Ascending aorta (tissue), 2 donors: ENCODE measurements at regions of chr12 and their contacts with region 1.

Region 1: DNA sequence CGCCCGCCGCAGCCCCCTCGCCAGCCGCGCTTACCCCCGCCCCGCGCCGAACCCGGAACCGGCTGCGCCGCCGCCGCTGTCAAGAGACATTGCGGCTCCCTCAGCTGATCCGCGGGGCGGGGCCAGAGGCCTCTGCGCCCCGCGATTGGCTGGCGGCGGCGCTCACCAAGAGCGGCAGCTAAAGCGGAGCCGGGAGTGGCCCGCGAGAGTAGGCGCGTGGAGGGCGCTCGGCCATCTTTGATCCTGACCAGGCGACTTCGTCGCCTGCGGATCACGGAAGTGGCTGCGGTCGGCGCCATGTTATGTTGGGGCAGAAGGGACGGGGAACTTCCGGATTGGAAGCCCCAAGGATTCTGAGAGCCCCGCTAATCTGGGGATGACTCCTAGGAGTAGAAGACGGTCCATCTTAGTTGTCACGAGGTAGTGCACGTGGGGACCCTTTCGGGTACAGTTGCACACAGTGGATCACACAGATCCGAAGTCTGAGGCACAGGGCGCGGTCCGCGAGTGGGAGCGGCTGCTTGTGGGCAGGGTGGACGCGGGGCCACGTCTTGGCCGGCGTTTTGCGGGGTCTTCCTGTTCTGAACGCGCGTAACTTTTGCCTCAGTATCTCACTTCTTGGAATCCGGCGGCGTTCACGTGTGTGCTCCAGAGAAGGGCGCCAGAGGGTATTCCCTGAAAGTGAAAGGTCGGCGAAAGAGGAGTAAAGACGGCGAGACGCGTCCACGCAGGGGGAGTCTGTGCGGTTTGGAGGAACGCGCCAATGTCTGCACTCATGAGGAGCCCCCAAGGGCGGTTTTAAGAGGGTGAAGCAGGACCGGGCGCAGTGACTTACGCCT is at the start of gene CHFR:
- DNase-seq: peak; percentile 92 to 98
- H3K4me3 ChIP-seq: peak within 1 kb of the TSS; percentile 76 to 80
- H3K27ac ChIP-seq: peak within 1 kb of the TSS; percentile 93 to 96
- H3K4me1 ChIP-seq: peaks cover 0 to 6% of the 10 kb centered on the region in 2 donors
- H3K27me3 ChIP-seq: no peaks in the 10 kb centered on the region
- CTCF ChIP-seq: no peak
- total RNA-seq, gene CHFR: 7.9 TPM

Region 2: DNA sequence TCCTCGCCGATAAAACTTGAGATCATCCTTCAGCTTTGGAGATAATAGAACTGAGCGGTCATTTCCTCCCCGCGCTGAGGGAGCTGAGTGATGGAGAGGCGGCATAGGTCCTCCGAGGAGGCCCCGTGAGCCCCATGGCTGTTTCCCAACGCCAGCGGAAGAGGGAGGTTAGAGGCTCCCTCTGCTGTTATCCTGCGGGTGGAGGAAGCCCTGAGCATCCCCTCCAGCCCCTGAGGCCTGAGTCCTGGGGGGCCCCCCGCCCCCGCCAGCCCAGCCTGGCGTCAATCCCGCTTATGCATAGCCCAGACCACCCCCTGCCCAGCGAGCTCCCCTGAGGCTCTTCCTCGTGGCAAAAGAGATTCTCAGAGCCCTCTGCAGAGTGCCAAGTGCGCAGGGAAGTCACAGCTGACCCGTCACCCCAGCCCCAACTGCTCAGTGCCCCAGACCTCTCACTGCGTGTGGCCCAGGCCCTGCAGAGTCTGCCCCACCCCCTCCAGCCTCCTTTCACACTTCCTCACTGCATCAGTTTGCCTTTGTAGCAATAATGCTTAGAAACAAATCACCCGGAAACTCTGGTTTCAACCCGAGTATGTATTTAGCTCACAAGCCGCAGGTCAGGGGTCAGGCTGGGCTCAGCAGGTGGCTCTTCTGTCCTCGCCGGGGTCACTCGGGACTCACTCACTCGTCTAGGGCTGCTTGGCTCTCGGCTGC is 513.7 kb before region 1 on chr12:
- intact Hi-C with region 1: no loop called
- DNase-seq: no peak
- H3K4me3 ChIP-seq: no peak overlapping the region
- H3K27ac ChIP-seq: no peak overlapping the region
- H3K4me1 ChIP-seq: no peaks in the 10 kb centered on the region
- H3K27me3 ChIP-seq: no peaks in the 10 kb centered on the region
- CTCF ChIP-seq: no peak

Region 3: GRCh38 chr12:132710422-132711168 is 177.1 kb before region 1 on chr12 and contains the start of gene PGAM5:
- intact Hi-C with region 1: no loop called
- DNase-seq: peak; percentile 30 to 87
- H3K4me3 ChIP-seq: peak within 1 kb of the TSS; percentile 83 to 90
- H3K27ac ChIP-seq: peak within 1 kb of the TSS; percentile 58 to 79
- H3K4me1 ChIP-seq: peaks cover 0 to 14% of the 10 kb centered on the region in 2 donors
- H3K27me3 ChIP-seq: no peaks in the 10 kb centered on the region
- CTCF ChIP-seq: no peak
- total RNA-seq, gene PGAM5: 41.2 TPM

Region 4: DNA sequence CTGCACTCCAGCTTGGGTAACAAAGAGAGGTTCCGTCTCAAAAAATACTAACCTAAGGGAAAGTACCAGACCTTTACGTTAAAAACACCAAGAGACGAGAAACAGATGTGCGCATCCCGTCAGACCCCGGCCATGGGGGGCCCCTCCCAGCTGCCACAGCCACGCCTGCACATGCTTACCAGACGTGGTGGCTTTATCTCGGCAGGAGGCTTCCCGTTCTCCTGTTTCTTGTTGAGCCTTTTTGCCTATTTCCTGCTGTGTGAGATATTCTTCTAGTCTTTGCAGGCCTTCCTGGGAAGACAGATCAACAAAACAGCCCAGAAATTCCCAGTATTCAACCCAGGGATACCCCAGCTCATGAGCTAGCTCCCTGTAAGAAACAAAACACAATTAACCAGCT is 153.5 kb before region 1 on chr12:
- intact Hi-C with region 1: no loop called
- DNase-seq: no peak
- H3K4me3 ChIP-seq: no peak overlapping the region
- H3K27ac ChIP-seq: no peak overlapping the region
- H3K4me1 ChIP-seq: no peaks in the 10 kb centered on the region
- H3K27me3 ChIP-seq: no peaks in the 10 kb centered on the region
- CTCF ChIP-seq: no peak

Region 5: DNA sequence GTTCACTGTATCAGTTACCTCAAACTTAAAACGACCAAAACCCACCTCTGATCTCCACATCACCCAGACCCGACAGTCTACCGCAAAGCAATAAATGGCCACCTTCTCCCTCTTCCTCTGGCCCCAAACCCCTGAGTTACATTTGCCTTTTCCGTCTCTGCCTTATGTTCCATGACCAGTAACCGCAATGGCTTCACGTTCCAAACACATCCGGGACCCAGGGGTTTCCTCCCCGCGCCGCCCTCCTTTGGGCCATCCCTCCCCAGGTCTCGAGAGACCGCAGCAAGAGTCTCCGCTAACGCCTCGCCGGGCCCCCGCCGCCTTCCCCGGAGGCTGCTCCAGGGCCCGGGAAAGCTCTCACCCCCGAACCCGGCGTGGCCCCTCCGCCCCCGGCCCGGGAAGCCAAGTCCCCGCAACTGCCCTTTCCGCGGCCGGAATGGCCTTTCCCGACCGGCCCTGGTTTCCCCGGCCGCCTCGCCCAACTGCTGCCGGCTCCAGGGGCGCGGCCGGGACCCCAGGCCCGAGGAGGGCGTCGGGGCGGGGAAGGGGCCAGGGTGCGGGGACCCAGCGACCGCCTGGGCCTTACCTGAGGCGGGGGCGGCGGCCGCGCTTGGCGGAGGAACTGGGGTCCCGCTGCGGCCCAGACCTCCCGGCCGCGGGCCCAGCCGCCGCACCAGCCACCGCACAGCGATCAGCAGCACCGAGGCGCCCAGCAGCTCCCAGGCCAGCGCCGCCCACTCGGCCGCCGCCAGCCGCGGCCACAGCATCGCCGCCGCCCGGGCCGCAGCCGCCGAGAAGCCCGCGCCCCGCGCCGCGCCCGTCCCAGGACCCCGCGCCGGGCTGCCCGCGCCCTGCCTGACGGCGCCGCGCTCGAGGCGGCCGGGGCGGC is 126.5 kb before region 1 on chr12 and contains the start of gene ANKLE2:
- intact Hi-C with region 1: loop called (anchors 5 kb)
- DNase-seq: peak in 1 of 2 donors; percentile 73
- H3K4me3 ChIP-seq: peak within 1 kb of the TSS; percentile 100
- H3K27ac ChIP-seq: peak within 1 kb of the TSS; percentile 97 to 99
- H3K4me1 ChIP-seq: peaks cover 13% of the 10 kb centered on the region in 2 donors
- H3K27me3 ChIP-seq: no peaks in the 10 kb centered on the region
- CTCF ChIP-seq: no peak
- total RNA-seq, gene ANKLE2: 54.2 TPM

Region 6: DNA sequence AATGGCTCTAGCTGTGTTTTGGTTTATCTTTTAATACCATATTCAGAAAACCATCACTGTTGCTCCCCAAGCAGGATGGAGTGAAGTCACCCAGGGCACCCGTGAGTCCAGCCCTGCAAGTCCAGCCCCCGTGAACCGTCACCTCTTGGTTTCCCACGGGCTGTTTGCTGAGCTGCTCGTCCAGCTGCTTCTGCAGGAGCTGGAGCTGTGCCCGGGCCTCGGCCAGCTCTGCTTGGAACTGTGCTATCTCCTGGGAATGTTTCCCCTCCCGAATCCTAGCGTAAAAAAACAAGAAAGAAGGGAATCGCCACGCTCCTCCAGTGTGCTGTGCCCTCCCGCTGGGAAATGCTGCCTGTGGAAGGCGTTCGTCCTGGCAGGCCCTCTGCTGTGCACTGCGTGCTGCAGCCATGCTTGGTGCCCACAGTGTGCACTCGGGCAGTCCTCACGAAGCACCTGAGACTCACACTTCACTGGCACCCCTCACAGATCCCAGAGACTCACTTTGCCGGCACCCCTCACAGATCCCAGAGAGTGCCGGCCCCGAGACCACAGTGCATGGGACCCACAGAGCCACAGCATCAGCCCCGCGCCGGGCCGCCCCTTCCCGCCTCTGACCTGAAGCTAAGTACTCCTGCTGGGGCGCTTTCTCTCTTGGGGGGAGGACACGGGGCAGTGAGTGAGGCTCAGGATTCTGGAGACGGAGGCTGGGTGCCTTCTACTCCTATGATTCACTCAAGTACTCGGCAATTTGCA is 110.7 kb before region 1 on chr12:
- intact Hi-C with region 1: no loop called
- DNase-seq: no peak
- H3K4me3 ChIP-seq: no peak overlapping the region
- H3K27ac ChIP-seq: no peak overlapping the region
- H3K4me1 ChIP-seq: no peaks in the 10 kb centered on the region
- H3K27me3 ChIP-seq: no peaks in the 10 kb centered on the region
- CTCF ChIP-seq: no peak

Region 7: GRCh38 chr12:132956011-132956788 is 68.5 kb after region 1 on chr12 and contains the start of gene ZNF605:
- intact Hi-C with region 1: loop called (anchors 2 kb)
- DNase-seq: peak; percentile 41 to 91
- H3K4me3 ChIP-seq: peak within 1 kb of the TSS; percentile 80 to 98
- H3K27ac ChIP-seq: peak within 1 kb of the TSS; percentile 89 to 92
- H3K4me1 ChIP-seq: peaks cover 0 to 2% of the 10 kb centered on the region in 2 donors
- H3K27me3 ChIP-seq: no peaks in the 10 kb centered on the region
- CTCF ChIP-seq: no peak
- total RNA-seq, gene ZNF605: 1.3 TPM

Region 8: DNA sequence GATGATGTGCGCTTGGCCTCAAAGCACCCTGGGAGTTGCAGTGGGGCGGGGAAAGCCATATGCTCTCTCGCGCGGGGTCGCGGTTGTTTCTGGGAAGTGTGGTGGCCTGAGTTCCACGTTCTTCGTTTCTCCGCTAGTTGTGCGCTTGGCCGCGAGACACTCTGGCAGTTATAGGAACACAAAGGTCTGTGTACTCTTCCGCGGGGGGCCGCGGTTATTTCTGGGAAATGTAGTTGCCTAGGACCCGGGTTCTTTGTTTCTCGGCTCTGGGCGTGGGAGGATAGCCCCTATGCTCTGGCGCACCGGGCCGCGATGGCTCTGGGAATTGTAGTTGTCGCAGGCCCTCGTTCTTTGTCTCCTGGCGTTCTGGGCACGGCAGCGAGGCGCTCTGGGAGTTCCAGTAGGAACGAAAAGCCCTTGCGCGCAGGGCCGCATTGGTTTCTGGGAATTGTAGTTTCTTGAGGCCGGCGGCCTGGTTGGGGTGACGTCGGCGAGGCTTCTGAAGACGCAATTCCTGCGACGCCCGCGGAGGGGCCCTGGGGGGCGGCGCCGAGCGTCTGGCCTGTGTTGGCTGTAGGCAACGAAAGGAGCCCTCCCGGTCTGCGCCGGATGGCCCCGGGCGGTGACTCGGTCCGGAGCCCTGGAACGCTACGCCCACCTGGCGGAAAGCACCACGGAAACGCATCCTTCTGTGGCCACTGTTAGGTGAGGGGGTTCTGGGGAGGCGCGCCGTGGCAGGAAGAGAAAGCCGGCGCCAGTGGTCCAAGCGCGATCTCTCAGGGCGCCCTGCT is 192.8 kb after region 1 on chr12 and contains the start of gene ZNF140:
- intact Hi-C with region 1: loop called (anchors 1 kb)
- DNase-seq: peak; percentile 83 to 98
- H3K4me3 ChIP-seq: peak within 1 kb of the TSS; percentile 71 to 91
- H3K27ac ChIP-seq: peak within 1 kb of the TSS; percentile 95 to 97
- H3K4me1 ChIP-seq: no peaks in the 10 kb centered on the region
- H3K27me3 ChIP-seq: no peaks in the 10 kb centered on the region
- CTCF ChIP-seq: peak in 2 of 3 experiments; percentile 12 to 25
- total RNA-seq, gene ZNF140: 11.6 TPM